Heart left ventricle (tissue), 16 donors: ENCODE measurements at regions of chr9 and their contacts with region 1.

Region 1: GRCh38 chr9:89602978-89603766 is 1.6 kb upstream of the GADD45G start:
- DNase-seq: peak; percentile 88 to 92 (median 89)
- ATAC-seq: peak; percentile 16 to 53 (median 32)
- H3K4me3 ChIP-seq: peak overlapping the region in 11 of 12 donors; percentile 1 to 95 (median 86)
- H3K27ac ChIP-seq: peak overlapping the region in 9 of 12 donors; percentile 8 to 98 (median 95)
- H3K4me1 ChIP-seq: peaks cover 6 to 48% (median 33%) of the 10 kb centered on the region in 12 donors
- H3K27me3 ChIP-seq: peaks cover 0 to 3% (median 0%) of the 10 kb centered on the region in 9 donors
- CTCF ChIP-seq: peak; percentile 79 to 90 (median 85)
- POLR2A ChIP-seq: no peak

Region 2: GRCh38 chr9:89732295-89732938 is 129.2 kb after region 1 on chr9:
- intact Hi-C with region 1: loop called in 5 of 10 experiments (anchors 5 to 10 kb)
- DNase-seq: no peak
- ATAC-seq: peak; percentile 46 to 75 (median 73)
- H3K4me3 ChIP-seq: no peak overlapping the region
- H3K27ac ChIP-seq: peak overlapping the region in 6 of 12 donors; percentile 29 to 69 (median 50)
- H3K4me1 ChIP-seq: peaks cover 9 to 31% (median 20%) of the 10 kb centered on the region in 12 donors
- H3K27me3 ChIP-seq: no peaks in the 10 kb centered on the region
- CTCF ChIP-seq: no peak
- POLR2A ChIP-seq: no peak

Region 3: GRCh38 chr9:89755821-89756220 is 152.6 kb after region 1 on chr9:
- intact Hi-C with region 1: loop called in 3 of 10 experiments (anchors 2 to 10 kb)
- DNase-seq: peak in 4 of 5 donors; percentile 43 to 78 (median 57)
- ATAC-seq: peak; percentile 27 to 78 (median 68)
- H3K4me3 ChIP-seq: no peak overlapping the region
- H3K27ac ChIP-seq: no peak overlapping the region
- H3K4me1 ChIP-seq: peaks cover 0 to 22% (median 8%) of the 10 kb centered on the region in 12 donors
- H3K27me3 ChIP-seq: no peaks in the 10 kb centered on the region
- CTCF ChIP-seq: no peak
- POLR2A ChIP-seq: no peak

Region 4: DNA sequence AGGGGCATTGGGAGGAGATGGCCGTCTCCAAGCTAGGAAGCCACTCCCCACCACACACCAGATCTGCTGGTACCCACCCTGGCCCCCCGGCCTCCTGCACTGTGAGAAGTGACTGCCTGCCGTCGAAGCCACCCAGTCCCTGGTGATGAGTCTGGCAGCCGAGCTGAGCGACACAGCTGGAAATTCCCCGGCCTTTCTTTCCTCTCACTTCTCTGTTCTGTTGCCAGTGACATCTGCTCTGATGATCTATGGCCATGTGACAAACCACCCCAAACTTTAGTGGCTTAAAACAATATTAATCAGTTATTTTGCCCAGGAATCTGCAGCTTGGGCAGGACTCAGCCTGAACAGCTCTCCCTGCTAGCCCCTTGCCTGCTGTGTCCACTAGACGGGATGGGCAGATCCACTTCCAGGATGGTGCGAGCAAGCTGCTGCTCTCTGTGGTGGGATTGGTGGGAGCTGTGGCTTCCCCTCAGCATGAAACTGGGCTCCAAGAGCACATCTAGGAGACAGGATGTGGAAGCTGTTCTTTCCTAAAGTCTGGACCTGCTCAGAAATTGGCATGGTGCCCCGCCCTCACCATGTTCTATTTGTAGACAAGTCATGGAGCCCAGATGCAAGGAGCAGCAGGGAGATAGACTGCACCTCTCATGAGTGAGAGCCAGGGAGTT is 212.9 kb after region 1 on chr9:
- intact Hi-C with region 1: loop called in 1 of 10 experiments (anchors 10 kb)
- DNase-seq: peak; percentile 63 to 82 (median 74)
- ATAC-seq: peak; percentile 44 to 71 (median 70)
- H3K4me3 ChIP-seq: no peak overlapping the region
- H3K27ac ChIP-seq: peak overlapping the region in 2 of 12 donors; percentile 17 to 43
- H3K4me1 ChIP-seq: peaks cover 0 to 29% (median 12%) of the 10 kb centered on the region in 12 donors
- H3K27me3 ChIP-seq: peaks cover 0 to 8% (median 0%) of the 10 kb centered on the region in 9 donors
- CTCF ChIP-seq: no peak
- POLR2A ChIP-seq: no peak

Region 5: GRCh38 chr9:89919169-89919681 is 316.1 kb after region 1 on chr9:
- intact Hi-C with region 1: loop called (anchors 1 to 5 kb)
- DNase-seq: peak in 4 of 5 donors; percentile 50 to 63 (median 58)
- ATAC-seq: peak; percentile 93 to 96 (median 94)
- H3K4me3 ChIP-seq: no peak overlapping the region
- H3K27ac ChIP-seq: no peak overlapping the region
- H3K4me1 ChIP-seq: peaks cover 0 to 12% (median 0%) of the 10 kb centered on the region in 12 donors
- H3K27me3 ChIP-seq: no peaks in the 10 kb centered on the region
- CTCF ChIP-seq: peak in 11 of 12 donors; percentile 25 to 68 (median 48)
- POLR2A ChIP-seq: no peak

Region 6: GRCh38 chr9:90102292-90102901 is 499.2 kb after region 1 on chr9:
- intact Hi-C with region 1: loop called (anchors 1 to 2 kb)
- DNase-seq: peak; percentile 78 to 88 (median 80)
- ATAC-seq: peak; percentile 58 to 89 (median 83)
- H3K4me3 ChIP-seq: no peak overlapping the region
- H3K27ac ChIP-seq: no peak overlapping the region
- H3K4me1 ChIP-seq: peaks cover 0 to 29% (median 10%) of the 10 kb centered on the region in 12 donors
- H3K27me3 ChIP-seq: no peaks in the 10 kb centered on the region
- CTCF ChIP-seq: peak; percentile 58 to 83 (median 78)
- POLR2A ChIP-seq: no peak